ENCODE measurements at regions of chr11 and their contacts with region 1.

Region 1: GRCh38 chr11:18706330-18707243 is 8.0 kb downstream of the TMEM86A start:
- DNase-seq: peak; percentile 71
- H3K4me3 ChIP-seq: peak overlapping the region; percentile 36 to 59 (median 46)
- H3K27ac ChIP-seq: peak overlapping the region; percentile 59 to 78 (median 70)
- H3K4me1 ChIP-seq: peaks cover 9 to 19% (median 12%) of the 10 kb centered on the region in 4 donors
- H3K27me3 ChIP-seq: no peaks in the 10 kb centered on the region
- CTCF ChIP-seq: no peak
- EP300 ChIP-seq: no peak
- POLR2A ChIP-seq: peak; percentile 35

Region 2: GRCh38 chr11:18624161-18624560 is 82.4 kb before region 1 on chr11:
- in situ Hi-C with region 1: loop called in 1 of 4 experiments (anchors 5 kb)
- intact Hi-C with region 1: no loop called
- DNase-seq: no peak
- H3K4me3 ChIP-seq: no peak overlapping the region
- H3K27ac ChIP-seq: no peak overlapping the region
- H3K4me1 ChIP-seq: peaks cover 0 to 7% (median 3%) of the 10 kb centered on the region in 4 donors
- H3K27me3 ChIP-seq: no peaks in the 10 kb centered on the region
- CTCF ChIP-seq: no peak
- EP300 ChIP-seq: no peak
- POLR2A ChIP-seq: no peak

Measured in transverse colon (tissue), 4 donors.